OCI-LY7 (cell line): ENCODE measurements at regions of chr14 and their contacts with region 1.

Region 1: GRCh38 chr14:22519877-22520685 is 68.9 kb downstream of the DAD1 start:
- DNase-seq: no peak
- H3K4me3 ChIP-seq: peak overlapping the region; percentile 23
- H3K27ac ChIP-seq: peak overlapping the region; percentile 49
- H3K4me1 ChIP-seq: peaks cover 100% of the 10 kb centered on the region
- CTCF ChIP-seq: no peak

Region 2: DNA sequence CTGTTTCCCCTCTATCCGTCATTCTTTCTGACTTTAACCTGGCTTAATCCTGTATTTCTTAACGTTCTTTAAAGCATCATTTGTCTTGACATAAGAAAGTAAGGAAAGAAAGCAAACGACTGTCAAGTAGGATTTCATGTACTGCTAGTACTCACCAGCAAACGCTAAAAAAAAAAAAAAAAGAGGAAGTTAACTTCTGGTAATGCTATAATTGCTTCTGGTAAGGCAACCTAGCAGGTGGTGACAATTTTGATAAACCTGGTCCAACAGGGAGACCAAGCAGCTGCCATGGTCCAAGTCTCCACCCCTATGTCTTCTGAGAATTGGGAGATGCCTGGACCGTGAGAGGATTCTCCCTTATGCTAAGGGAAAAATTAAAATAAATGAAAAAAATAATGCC is 237.7 kb before region 1 on chr14:
- CTCF ChIA-PET with region 1: no interaction called
- POLR2A ChIA-PET with region 1: no interaction called
- intact Hi-C with region 1: no loop called
- DNase-seq: peak; percentile 86
- H3K4me3 ChIP-seq: peak overlapping the region; percentile 55
- H3K27ac ChIP-seq: peak overlapping the region; percentile 71
- H3K4me1 ChIP-seq: peaks cover 36% of the 10 kb centered on the region
- CTCF ChIP-seq: no peak

Region 3: GRCh38 chr14:22505697-22506377 is 14.2 kb before region 1 on chr14:
- CTCF ChIA-PET with region 1: interaction called, 12 read pairs
- POLR2A ChIA-PET with region 1: interaction called, 65 read pairs
- intact Hi-C with region 1: no loop called
- DNase-seq: peak; percentile 66
- H3K4me3 ChIP-seq: peak overlapping the region; percentile 8
- H3K27ac ChIP-seq: peak overlapping the region; percentile 64
- H3K4me1 ChIP-seq: peaks cover 84% of the 10 kb centered on the region
- CTCF ChIP-seq: no peak

Region 4: GRCh38 chr14:22641846-22642245 is 121.8 kb after region 1 on chr14:
- CTCF ChIA-PET with region 1: no interaction called
- POLR2A ChIA-PET with region 1: no interaction called
- intact Hi-C with region 1: no loop called
- DNase-seq: no peak
- H3K4me3 ChIP-seq: no peak overlapping the region
- H3K27ac ChIP-seq: no peak overlapping the region
- H3K4me1 ChIP-seq: peaks cover 3% of the 10 kb centered on the region
- CTCF ChIP-seq: no peak